ENCODE measurements at regions of chr14 and their contacts with region 1.

Region 1: GRCh38 chr14:59254146-59254941 is 65.9 kb downstream of the DAAM1 start:
- DNase-seq: no peak
- ATAC-seq: peak; percentile 44; the same call in 2 of the 3 replicates
- H3K4me3 ChIP-seq: no peak overlapping the region
- H3K27ac ChIP-seq: peak overlapping the region; percentile 4
- H3K4me1 ChIP-seq: peaks cover 35% of the 10 kb centered on the region
- H3K27me3 ChIP-seq: no peaks in the 10 kb centered on the region
- CTCF ChIP-seq: no peak
- EP300 ChIP-seq: no peak
- POLR2A ChIP-seq: no peak
- RAD21 ChIP-seq: no peak

Region 2: DNA sequence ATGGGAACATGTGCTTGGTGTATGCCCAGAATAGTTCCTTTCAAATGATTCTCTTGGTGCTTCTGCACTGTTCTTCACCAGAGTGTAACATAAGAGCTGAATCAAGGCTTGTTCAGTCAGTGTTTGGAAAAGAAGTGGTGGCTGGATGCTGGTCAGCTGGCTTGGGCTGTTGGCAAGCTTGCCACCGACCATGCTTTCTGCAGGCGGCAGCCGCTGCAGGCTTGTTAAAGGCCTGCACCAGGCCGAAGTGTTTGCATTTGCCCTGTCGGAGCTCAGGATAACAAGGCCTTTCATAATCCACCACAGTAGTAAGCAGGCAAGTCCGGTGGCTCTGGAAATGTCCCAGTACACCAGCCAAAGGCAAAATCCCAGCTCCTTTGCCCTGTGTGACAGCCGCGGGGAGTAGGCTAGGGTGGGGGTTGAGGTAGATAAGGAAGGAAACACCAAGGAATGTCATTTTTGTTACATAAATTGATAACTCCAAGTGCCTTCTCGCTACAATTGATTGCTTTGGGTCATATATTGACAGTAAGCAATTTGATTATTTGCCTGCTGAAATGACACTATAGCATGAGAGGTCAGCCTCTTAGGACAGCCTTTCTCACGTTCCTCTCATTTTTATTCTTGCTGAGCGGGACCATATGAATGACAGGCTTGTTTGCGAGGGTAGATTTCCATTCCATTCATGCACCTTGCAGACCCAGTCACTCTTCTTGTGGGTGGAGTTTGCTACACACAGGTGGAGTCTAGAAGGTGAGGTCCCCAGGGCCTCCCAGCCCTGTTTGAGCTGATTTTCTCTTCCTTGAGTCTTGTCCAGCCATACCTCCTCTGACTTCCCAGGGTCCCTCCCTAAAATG is 38.8 kb before region 1 on chr14:
- CTCF ChIA-PET with region 1: no interaction called
- POLR2A ChIA-PET with region 1: no interaction called
- in situ Hi-C with region 1: no loop called
- intact Hi-C with region 1: loop called (anchors 5 kb)
- DNase-seq: peak; percentile 78
- ATAC-seq: peak; percentile 97
- H3K4me3 ChIP-seq: peak overlapping the region; percentile 19 to 63 (median 38); a peak in 5 of 6 replicates
- H3K27ac ChIP-seq: peak overlapping the region; percentile 62
- H3K4me1 ChIP-seq: peaks cover 62% of the 10 kb centered on the region
- H3K27me3 ChIP-seq: no peaks in the 10 kb centered on the region
- CTCF ChIP-seq: no peak; the same call in 1 of the 2 replicates
- EP300 ChIP-seq: no peak
- POLR2A ChIP-seq: no peak
- RAD21 ChIP-seq: peak; percentile 18; the same call in 1 of the 2 replicates

Measured in HepG2 (cell line).